ENCODE measurements at regions of chr9 and their contacts with region 1.

Region 1: DNA sequence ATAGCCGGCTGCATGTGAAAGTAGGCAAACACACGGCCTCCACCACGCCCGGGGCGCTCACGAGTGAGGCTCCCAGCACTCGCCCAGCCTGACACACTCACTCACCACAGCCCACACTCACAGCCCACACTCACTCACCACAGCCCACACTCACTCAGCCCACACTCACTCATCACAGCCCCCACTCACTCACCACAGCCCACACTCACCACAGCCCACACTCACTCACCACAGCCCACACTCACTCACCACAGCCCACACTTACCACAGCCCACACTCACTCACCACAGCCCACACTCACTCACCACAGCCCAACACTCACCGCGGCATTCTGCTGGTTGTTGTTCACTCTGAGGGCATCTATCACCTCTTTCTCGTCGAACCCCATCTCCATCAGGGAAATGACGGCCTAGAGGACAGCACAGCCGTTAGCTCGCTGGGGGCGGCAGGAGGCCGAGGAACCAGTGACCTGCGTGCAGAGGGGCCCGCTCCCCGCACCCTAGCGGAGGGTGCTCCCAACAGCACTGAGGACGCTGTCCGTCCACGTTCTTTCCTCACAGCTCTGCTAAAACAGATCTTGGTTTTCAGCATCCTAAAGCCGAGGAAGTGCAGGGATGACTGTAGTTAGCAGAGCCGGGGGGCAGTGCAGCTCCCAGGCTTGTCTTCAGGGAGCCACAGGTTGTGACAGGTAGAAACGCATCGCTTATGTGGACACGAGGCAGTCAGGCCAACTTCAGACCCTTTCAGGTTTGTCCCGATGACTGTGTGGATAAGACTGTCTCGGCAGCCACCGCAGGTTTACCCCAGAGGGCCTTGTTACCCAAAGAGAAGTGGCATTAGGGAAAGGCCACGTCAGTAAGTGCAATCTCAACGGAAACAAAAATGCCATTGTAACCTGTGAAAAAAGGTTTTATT is 21.6 kb downstream of the UBAC1 start:
- DNase-seq: no peak
- ATAC-seq: no peak

Region 2: DNA sequence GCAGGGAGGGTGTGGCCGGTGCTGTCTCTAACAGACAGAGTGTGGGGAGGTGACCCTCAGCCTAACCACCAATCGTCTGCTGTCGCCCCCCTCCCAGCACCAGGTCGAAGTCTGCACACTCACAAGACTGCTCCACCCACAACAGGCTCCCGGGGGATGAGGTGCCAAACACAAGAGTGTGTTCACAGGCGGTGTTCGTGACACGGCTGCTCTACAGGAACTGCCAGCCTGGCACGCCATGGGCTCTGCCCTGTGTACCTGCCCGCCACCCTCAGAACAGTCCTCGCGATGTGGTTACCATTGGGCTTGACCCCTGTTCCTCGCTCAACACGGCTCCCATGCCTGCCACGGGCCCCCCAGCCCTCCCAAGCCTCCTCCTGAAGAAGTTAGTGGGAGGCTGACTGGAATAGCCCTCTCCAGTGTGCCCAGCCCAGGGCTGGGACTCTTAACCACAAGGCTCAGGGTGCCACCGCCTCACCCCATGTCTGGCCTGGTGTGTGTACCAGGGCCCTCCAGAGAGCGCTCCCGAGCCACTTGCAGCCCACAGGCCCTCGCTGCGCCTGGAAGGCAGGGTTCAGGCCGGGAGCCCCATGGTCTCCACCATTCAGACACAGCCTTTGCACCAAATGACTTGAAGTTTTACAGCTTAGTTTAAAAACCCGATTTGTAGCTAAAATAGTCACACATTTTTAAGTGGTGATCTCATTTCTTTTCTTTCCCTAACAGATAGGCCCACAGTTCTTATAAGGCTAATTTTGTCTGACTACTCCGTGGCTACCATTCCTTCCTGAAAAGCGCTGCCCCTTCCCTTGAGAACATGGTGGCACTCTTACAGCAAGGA is 134.8 kb before region 1 on chr9:
- intact Hi-C with region 1: loop called (anchors 10 kb)
- DNase-seq: peak; percentile 18
- ATAC-seq: no peak